ENCODE measurements at regions of chr2 and their contacts with region 1.

Region 1: GRCh38 chr2:71402417-71402816 is 50.9 kb upstream of the DYSF start:
- DNase-seq: no peak
- H3K4me3 Mint-ChIP-seq: no peak overlapping the region
- H3K27ac Mint-ChIP-seq: no peak overlapping the region
- H3K4me1 Mint-ChIP-seq: no peaks in the 10 kb centered on the region
- H3K27me3 Mint-ChIP-seq: no peaks in the 10 kb centered on the region
- CTCF ChIP-seq: no peak

Region 2: DNA sequence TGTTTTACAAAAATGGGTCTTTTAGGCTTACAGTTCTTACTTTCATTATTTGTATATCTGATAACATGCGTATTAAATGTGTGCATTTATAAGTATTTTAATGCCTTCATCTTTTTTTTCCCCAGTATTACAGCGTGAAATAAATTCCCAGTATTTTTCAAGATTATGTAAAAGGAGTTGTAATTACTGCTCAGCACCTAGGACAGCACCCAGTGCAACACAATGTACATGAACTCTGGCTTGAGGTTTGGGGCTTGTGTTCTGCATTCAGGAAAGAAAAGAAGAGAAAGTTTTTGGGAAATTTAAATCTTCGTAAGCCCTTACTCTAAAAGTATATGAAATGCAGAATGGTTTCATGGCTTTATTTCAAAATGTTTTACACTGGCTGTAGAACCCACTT is 54.1 kb before region 1 on chr2:
- CTCF ChIA-PET with region 1: no interaction called
- intact Hi-C with region 1: no loop called
- DNase-seq: no peak
- H3K4me3 Mint-ChIP-seq: no peak overlapping the region
- H3K27ac Mint-ChIP-seq: no peak overlapping the region
- H3K4me1 Mint-ChIP-seq: peaks cover 18% of the 10 kb centered on the region
- H3K27me3 Mint-ChIP-seq: no peaks in the 10 kb centered on the region
- CTCF ChIP-seq: no peak

Region 3: DNA sequence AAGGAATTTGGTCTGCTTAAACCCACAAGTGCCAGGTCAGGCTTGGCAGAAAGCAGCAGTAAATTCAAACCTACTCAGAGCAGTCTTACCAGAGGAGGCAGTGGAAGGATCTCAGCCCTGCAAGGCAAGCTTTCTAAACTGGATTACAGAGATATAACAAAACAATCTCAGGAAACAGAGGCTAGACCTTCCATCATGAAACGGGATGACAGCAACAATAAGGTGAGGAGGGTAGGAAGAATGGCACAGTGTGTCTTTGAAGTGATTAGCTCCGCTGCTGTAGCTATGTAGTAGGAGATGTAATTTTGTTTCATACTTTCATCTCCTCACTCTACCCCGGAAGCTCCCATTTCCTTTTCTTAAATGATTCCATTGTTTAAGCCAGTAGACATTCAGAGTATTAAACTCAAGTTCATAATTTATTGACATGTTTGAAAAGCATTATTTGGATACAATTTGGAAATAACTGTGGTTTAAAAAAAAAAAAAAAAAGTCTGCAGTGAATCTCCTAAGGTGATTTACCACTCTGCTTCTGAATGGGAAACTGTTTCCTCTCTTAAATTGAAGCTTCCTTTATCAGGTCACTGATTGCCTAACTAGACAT is 21.5 kb after region 1 on chr2:
- CTCF ChIA-PET with region 1: interaction called, 4 read pairs
- intact Hi-C with region 1: loop called (anchors 1 kb)
- DNase-seq: no peak
- H3K4me3 Mint-ChIP-seq: no peak overlapping the region
- H3K27ac Mint-ChIP-seq: no peak overlapping the region
- H3K4me1 Mint-ChIP-seq: peaks cover 22% of the 10 kb centered on the region
- H3K27me3 Mint-ChIP-seq: no peaks in the 10 kb centered on the region
- CTCF ChIP-seq: no peak

Region 4: GRCh38 chr2:71609958-71610357 is 207.5 kb after region 1 on chr2:
- CTCF ChIA-PET with region 1: no interaction called
- intact Hi-C with region 1: no loop called
- DNase-seq: no peak
- H3K4me3 Mint-ChIP-seq: no peak overlapping the region
- H3K27ac Mint-ChIP-seq: no peak overlapping the region
- H3K4me1 Mint-ChIP-seq: no peaks in the 10 kb centered on the region
- H3K27me3 Mint-ChIP-seq: peaks cover 64% of the 10 kb centered on the region
- CTCF ChIP-seq: peak; percentile 39

Measured in Calu3 (cell line).